Caco-2 (cell line): ENCODE measurements at regions of chr12 and their contacts with region 1.

Region 1: DNA sequence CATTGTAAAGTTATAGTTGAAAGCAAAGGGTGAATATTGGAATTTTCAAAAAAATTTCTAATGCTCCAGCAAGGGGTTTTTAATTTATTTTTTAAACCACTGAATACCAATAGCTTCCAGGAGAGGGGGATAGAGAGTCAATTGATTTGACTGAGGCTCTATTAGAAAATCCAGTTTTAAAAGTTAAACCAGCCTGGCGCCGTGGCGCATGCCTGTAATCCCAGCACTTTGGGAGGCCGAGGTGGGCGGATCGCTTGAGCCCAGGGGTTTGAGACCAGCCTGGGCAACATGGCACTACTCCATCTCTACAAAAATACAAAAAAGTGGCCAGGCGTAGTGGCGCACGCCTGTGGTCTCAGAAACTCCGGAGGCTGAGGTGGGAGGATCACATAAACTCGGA is 150.1 kb downstream of the SLC38A4 start:
- DNase-seq: peak in 1 of 2 experiments; percentile 66
- H3K4me3 ChIP-seq: no peak overlapping the region
- H3K4me3 Mint-ChIP-seq: no peak overlapping the region
- H3K27ac Mint-ChIP-seq: no peak overlapping the region
- H3K4me1 ChIP-seq: peaks cover 7% of the 10 kb centered on the region; the same call in 1 of the 2 replicates
- H3K4me1 Mint-ChIP-seq: peaks cover 7% of the 10 kb centered on the region
- H3K27me3 ChIP-seq: no peaks in the 10 kb centered on the region; the same call in 1 of the 2 replicates
- H3K27me3 Mint-ChIP-seq: no peaks in the 10 kb centered on the region
- CTCF ChIP-seq: peak; percentile 64 to 88

Region 2: DNA sequence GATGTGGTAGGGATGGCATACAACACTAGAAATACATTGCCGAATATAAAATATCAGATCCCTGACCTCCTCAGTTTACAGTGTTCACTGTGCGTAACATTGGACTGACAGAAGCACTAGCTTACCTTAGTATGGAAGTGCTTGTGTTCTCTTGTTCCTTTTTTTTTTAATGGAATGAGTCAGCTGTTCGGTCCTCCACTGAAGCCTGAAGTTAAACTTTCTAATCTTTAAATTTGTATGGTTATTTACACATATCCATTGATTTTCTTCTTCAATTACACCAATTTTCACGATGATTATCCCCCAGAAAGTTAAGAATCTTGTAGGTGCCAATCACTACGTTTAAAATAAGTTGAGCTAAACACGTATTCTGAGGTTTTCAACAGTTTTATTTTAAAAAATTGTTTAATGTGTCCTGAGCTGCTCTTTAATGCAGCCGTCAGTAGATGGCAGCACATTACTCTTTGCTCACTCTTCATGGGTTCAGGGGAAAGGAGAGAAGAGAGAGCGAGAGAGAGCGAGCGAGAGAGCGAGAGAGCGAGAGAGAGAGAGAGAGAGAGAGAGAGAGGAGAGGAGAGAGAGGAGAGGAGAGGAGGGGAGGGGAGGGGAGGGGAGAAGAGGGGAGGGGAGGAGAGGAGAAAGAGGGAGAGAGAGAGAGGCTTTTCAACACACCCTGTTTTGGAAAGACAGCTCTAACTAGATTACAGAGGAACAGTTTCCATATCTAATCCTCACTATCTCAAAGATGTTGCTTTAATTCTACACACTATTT is 550.7 kb before region 1 on chr12:
- CTCF ChIA-PET with region 1: interaction called, 4 read pairs
- POLR2A ChIA-PET with region 1: no interaction called
- intact Hi-C with region 1: loop called (anchors 2 kb)
- DNase-seq: peak in 1 of 2 experiments; percentile 64
- H3K4me3 ChIP-seq: no peak overlapping the region
- H3K4me3 Mint-ChIP-seq: peak overlapping the region; percentile 35
- H3K27ac Mint-ChIP-seq: no peak overlapping the region
- H3K4me1 ChIP-seq: peaks cover 6% of the 10 kb centered on the region
- H3K4me1 Mint-ChIP-seq: peaks cover 19% of the 10 kb centered on the region
- H3K27me3 ChIP-seq: no peaks in the 10 kb centered on the region
- H3K27me3 Mint-ChIP-seq: peaks cover 18% of the 10 kb centered on the region
- CTCF ChIP-seq: peak; percentile 43 to 84

Region 3: DNA sequence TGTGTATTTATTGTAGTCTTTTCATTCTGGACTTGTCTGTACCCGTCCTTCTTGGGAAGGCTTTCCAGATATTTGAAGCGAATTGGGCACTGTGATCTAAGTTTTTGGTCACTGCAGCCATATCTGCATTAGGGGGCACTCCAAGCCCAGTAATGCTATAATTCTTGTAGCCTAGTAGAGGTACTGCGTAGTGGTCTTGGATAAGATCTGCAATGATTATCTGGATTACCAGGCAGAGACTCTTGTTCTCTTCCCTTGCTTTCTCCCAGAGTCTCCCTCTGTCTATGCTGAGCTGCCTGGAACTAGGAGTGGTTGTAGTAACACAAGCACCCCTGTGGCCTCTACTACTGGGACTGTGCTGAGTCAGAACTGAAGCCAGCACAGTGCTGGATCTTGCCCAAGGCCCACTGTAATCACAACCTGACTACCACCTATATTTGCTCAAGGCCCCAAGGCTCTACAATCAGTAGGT is 333.1 kb before region 1 on chr12:
- CTCF ChIA-PET with region 1: no interaction called
- POLR2A ChIA-PET with region 1: no interaction called
- intact Hi-C with region 1: loop called (anchors 1 kb)
- DNase-seq: peak; percentile 41 to 63
- H3K4me3 ChIP-seq: no peak overlapping the region
- H3K4me3 Mint-ChIP-seq: no peak overlapping the region
- H3K27ac Mint-ChIP-seq: no peak overlapping the region
- H3K4me1 ChIP-seq: no peaks in the 10 kb centered on the region
- H3K4me1 Mint-ChIP-seq: no peaks in the 10 kb centered on the region
- H3K27me3 ChIP-seq: no peaks in the 10 kb centered on the region
- H3K27me3 Mint-ChIP-seq: peaks cover 5% of the 10 kb centered on the region
- CTCF ChIP-seq: peak; percentile 60 to 71

Region 4: GRCh38 chr12:46933947-46934346 is 258.2 kb after region 1 on chr12:
- CTCF ChIA-PET with region 1: interaction called, 5 read pairs
- POLR2A ChIA-PET with region 1: no interaction called
- intact Hi-C with region 1: loop called (anchors 1 kb)
- DNase-seq: peak in 1 of 2 experiments; percentile 59
- H3K4me3 ChIP-seq: no peak overlapping the region
- H3K4me3 Mint-ChIP-seq: no peak overlapping the region
- H3K27ac Mint-ChIP-seq: no peak overlapping the region
- H3K4me1 ChIP-seq: peaks cover 3% of the 10 kb centered on the region; the same call in 1 of the 2 replicates
- H3K4me1 Mint-ChIP-seq: peaks cover 7% of the 10 kb centered on the region
- H3K27me3 ChIP-seq: no peaks in the 10 kb centered on the region
- H3K27me3 Mint-ChIP-seq: no peaks in the 10 kb centered on the region
- CTCF ChIP-seq: peak; percentile 47 to 69

Region 5: GRCh38 chr12:47021298-47021697 is 345.6 kb after region 1 on chr12:
- CTCF ChIA-PET with region 1: interaction called, 4 read pairs
- POLR2A ChIA-PET with region 1: no interaction called
- intact Hi-C with region 1: loop called (anchors 2 kb)
- DNase-seq: peak in 1 of 2 experiments; percentile 74
- H3K4me3 ChIP-seq: no peak overlapping the region
- H3K4me3 Mint-ChIP-seq: no peak overlapping the region
- H3K27ac Mint-ChIP-seq: no peak overlapping the region
- H3K4me1 ChIP-seq: peaks cover 17% of the 10 kb centered on the region
- H3K4me1 Mint-ChIP-seq: peaks cover 22% of the 10 kb centered on the region
- H3K27me3 ChIP-seq: no peaks in the 10 kb centered on the region
- H3K27me3 Mint-ChIP-seq: peaks cover 2% of the 10 kb centered on the region
- CTCF ChIP-seq: peak; percentile 65 to 73